ENCODE measurements at regions of chr7 and their contacts with region 1.

Region 1: DNA sequence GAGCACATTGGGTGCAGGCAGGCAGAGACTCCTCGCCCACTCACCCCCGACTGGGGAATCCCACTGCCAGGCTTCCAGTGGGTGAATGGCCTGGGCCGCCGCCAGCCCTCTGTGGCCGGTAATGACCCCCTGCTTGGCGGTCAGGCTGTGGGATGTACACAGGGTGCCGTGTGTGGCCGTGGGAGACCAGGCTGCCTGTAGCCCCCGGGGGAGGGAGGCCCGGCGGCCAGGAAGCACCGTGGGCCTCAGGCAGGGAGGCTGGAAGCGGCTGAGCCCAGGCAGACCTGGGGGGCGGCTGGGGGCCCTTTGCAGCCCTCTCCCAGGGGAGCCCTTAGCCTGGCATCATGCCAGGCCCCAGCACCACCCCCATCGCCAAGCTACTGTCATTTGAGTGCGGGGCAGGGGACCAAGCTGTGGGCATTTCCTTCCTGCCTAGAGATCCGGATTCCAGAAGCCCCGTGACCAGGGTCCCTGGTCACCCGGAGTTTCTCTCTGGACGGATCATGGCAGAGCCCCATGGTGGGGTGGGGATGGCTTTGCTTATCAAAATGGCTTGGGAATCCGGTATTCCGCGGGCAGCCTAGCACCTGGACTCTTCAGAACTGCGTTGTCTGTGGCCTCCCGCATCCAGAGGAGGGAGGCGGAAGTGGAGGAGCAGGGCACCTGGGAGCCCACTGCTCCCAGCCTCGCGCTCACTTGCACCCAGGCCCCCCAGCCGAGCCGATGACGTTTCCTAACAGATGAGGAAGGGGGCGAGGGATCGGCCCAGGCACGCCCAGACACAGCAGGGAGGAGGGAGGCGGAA is 1.1 kb downstream of the TTYH3 start:
- DNase-seq: peak; percentile 45
- ATAC-seq: no peak
- H3K4me3 Mint-ChIP-seq: peak overlapping the region; percentile 87
- H3K27ac Mint-ChIP-seq: peak overlapping the region; percentile 70
- H3K4me1 Mint-ChIP-seq: peaks cover 42% of the 10 kb centered on the region
- H3K27me3 Mint-ChIP-seq: peaks cover under 1% of the 10 kb centered on the region
- CTCF ChIP-seq: no peak

Region 2: GRCh38 chr7:2403014-2403717 is 229.8 kb before region 1 on chr7 and contains the start of gene CHST12:
- CTCF ChIA-PET with region 1: no interaction called
- POLR2A ChIA-PET with region 1: no interaction called
- intact Hi-C with region 1: loop called (anchors 5 kb)
- DNase-seq: peak; percentile 91
- ATAC-seq: peak; percentile 77
- H3K4me3 Mint-ChIP-seq: peak within 1 kb of the TSS; percentile 85
- H3K27ac Mint-ChIP-seq: peak within 1 kb of the TSS; percentile 93
- H3K4me1 Mint-ChIP-seq: peaks cover 47% of the 10 kb centered on the region
- H3K27me3 Mint-ChIP-seq: no peaks in the 10 kb centered on the region
- CTCF ChIP-seq: no peak
- total RNA-seq, gene CHST12: 10.3 and 14.4 TPM in 2 replicates

Region 3: GRCh38 chr7:2460188-2460587 is 172.7 kb before region 1 on chr7:
- CTCF ChIA-PET with region 1: no interaction called
- POLR2A ChIA-PET with region 1: no interaction called
- intact Hi-C with region 1: no loop called
- DNase-seq: no peak
- ATAC-seq: no peak
- H3K4me3 Mint-ChIP-seq: no peak overlapping the region
- H3K27ac Mint-ChIP-seq: no peak overlapping the region
- H3K4me1 Mint-ChIP-seq: no peaks in the 10 kb centered on the region
- H3K27me3 Mint-ChIP-seq: no peaks in the 10 kb centered on the region
- CTCF ChIP-seq: no peak

Region 4: DNA sequence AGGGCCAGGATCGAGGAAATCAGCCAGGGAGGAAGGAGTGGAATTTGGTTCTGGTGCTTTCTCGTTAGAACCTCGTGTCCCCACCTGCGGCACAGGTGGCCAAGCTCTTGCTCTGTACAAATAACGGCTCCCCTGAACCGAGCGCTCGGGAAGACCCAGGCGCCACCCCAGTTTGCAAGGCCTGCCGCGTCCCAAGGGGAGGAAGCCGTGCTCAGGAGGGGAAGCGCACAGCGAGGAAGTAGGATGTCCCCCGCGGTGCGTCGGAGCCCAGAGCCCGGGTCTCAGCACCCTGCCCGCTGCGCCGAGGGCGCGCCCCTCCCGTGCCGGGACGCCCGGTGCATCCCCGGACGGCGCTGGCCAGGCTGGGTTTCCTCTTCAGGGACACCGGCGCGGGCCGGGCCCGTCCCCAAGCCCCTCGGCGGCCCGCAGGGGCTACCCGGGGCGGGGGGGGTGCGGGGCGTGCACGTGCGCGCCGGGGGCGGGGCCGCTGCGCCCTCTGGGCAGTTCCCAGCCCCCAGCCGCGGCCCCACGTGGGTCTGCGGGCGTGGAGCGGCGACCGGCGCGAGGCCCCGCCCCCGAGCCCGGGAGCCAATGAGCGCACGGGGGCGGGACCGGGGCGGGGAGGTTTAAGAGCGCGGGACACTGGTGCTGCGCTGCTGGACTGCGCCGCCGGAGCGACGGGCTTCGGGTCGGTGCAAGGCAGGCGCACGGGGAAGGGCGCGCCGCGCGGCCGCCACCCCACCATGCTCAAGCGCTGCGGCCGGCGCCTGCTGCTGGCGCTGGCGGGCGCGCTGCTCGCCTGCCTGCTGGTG is 113.6 kb before region 1 on chr7 and contains the start of gene LFNG:
- CTCF ChIA-PET with region 1: no interaction called
- POLR2A ChIA-PET with region 1: interaction called, 3 read pairs
- intact Hi-C with region 1: loop called (anchors 2 kb)
- DNase-seq: peak; percentile 94
- ATAC-seq: peak; percentile 75
- H3K4me3 Mint-ChIP-seq: peak within 1 kb of the TSS; percentile 96
- H3K27ac Mint-ChIP-seq: peak within 1 kb of the TSS; percentile 87
- H3K4me1 Mint-ChIP-seq: peaks cover 49% of the 10 kb centered on the region
- H3K27me3 Mint-ChIP-seq: no peaks in the 10 kb centered on the region
- CTCF ChIP-seq: no peak
- total RNA-seq, gene LFNG: 87.4 and 95.8 TPM in 2 replicates

Region 5: DNA sequence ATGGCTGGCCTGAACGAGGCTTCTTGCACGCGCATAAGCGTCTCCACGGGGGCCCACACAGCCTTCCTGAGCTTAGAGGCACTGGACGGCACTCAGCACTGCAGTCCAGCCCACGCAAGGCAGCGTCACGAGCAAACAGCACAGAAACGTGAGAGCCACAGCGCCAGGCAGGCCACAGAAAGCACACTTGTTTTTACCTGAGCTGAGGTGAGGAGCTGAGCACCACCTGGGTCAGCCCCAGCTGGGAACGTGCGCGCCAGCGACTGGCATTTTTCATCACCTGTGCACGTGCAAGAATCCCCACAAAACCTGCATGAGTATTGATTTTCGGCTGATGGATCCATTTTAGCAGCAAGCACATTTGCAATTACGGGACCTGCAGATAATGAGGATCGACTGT is 47.5 kb before region 1 on chr7:
- CTCF ChIA-PET with region 1: no interaction called
- POLR2A ChIA-PET with region 1: interaction called, 14 read pairs
- intact Hi-C with region 1: no loop called
- DNase-seq: no peak
- ATAC-seq: no peak
- H3K4me3 Mint-ChIP-seq: no peak overlapping the region
- H3K27ac Mint-ChIP-seq: no peak overlapping the region
- H3K4me1 Mint-ChIP-seq: peaks cover 3% of the 10 kb centered on the region
- H3K27me3 Mint-ChIP-seq: no peaks in the 10 kb centered on the region
- CTCF ChIP-seq: no peak

Region 6: DNA sequence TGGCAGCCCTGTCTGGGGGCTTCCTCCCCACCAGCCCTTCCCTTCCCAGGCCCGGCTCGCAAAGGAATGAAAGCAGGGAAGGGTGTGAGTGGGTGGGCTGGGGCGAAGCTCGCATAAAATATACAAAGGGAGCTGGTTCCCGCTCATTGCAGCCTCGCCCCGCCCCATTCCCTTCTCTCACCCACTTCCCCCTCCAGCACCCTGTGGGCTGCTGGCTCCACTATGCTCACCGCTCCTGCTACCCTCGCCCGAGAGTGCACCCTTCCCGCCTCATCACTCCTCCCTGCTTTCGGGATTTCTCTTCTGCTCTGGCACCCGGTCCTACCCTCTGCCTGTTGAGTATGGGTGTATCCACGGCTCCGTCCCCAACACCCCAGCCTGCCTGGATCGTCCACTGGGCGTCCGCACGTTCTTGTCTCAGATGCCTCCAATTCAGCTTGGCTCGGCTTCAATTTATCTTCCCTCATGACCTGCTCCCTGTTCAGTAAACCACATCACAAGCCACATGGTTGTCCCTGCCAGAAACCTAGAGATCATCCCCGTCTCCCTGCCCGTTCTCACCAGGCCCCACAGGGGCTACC is 15.5 kb before region 1 on chr7:
- CTCF ChIA-PET with region 1: no interaction called
- POLR2A ChIA-PET with region 1: interaction called, 15 read pairs
- intact Hi-C with region 1: no loop called
- DNase-seq: no peak
- ATAC-seq: no peak
- H3K4me3 Mint-ChIP-seq: no peak overlapping the region
- H3K27ac Mint-ChIP-seq: no peak overlapping the region
- H3K4me1 Mint-ChIP-seq: peaks cover 14% of the 10 kb centered on the region
- H3K27me3 Mint-ChIP-seq: no peaks in the 10 kb centered on the region
- CTCF ChIP-seq: no peak

Measured in activated B cell treated with CpG ODN at 0.5 μM for 24 hours (primary cell).